AG04449 (cell line): ENCODE measurements at regions of chr10 and their contacts with region 1.

Region 1: DNA sequence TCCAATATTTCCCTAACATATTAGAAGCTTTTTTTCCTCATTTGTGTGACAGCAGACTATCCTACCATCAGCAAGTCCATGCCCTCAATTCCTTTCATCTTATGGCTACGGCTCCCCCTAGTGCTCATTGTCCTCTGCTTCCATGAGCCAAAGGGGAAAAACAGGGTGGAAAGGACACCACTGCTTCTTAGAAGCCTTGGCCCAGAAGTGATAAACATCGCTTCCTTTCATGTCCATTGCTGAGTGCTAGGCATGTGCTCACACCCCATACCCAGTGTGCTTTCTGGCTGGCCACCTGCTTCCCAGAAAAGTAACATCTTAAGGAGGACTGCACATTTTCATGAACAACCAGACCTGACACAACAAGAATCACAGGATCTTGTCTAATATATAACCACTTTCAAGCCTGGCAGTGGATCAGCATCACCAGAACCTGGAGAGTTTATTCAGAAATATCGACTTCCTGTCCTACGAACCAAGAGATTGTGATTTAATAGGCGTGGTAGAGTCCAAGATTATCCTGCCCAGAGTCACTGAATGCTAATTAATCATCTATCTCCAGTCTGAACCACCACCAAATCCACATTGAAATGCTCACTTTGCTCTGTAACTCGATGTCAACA is 650.5 kb upstream of the SORCS1 start:
- DNase-seq: peak; percentile 12
- H3K4me3 ChIP-seq: no peak overlapping the region
- CTCF ChIP-seq: peak; percentile 80

Region 2: DNA sequence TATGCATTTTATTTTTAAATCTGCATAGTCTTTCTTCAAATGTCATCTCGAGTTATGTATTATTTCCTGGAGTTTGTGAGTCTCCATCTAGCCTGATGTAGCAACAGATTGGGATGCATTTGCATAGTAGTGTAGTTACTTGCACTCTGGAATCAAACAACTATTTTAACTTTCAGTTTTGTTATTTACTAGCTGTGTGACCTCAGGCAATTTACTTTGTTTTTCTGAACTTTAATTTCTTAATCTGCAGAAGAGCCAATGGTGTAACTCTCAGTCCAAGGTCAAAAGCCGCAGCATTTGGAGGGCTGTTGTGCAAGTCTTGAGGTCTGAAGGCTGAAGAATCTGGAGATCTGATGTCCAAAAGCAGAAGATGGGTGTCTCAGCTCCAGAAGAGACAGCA is 474.6 kb before region 1 on chr10:
- CTCF ChIA-PET with region 1: no interaction called
- POLR2A ChIA-PET with region 1: no interaction called
- DNase-seq: no peak
- H3K4me3 ChIP-seq: no peak overlapping the region
- CTCF ChIP-seq: no peak

Region 3: GRCh38 chr10:107409522-107409921 is 405.5 kb before region 1 on chr10:
- CTCF ChIA-PET with region 1: interaction called, 88 read pairs
- POLR2A ChIA-PET with region 1: no interaction called
- DNase-seq: no peak
- H3K4me3 ChIP-seq: no peak overlapping the region
- CTCF ChIP-seq: peak; percentile 43

Region 4: DNA sequence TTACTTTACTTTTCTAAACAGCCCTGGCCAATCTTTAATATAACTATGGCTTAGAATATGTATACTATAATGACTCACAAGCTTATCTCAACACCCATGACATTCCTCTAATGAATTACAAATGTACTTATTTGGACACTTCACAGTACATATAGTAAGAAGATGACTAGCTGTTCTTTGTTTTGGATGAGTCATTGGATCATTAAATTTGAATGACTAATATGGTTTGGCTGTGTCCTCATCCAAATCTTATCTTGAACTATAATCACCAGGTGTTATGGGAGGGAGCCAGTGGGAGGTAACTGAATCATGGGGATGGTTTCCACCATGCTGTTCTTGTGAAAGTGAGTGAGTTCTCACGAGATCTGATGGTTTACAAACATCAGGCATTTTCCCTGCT is 157.0 kb after region 1 on chr10:
- CTCF ChIA-PET with region 1: no interaction called
- POLR2A ChIA-PET with region 1: no interaction called
- DNase-seq: peak; percentile 61
- H3K4me3 ChIP-seq: no peak overlapping the region
- CTCF ChIP-seq: no peak

Region 5: DNA sequence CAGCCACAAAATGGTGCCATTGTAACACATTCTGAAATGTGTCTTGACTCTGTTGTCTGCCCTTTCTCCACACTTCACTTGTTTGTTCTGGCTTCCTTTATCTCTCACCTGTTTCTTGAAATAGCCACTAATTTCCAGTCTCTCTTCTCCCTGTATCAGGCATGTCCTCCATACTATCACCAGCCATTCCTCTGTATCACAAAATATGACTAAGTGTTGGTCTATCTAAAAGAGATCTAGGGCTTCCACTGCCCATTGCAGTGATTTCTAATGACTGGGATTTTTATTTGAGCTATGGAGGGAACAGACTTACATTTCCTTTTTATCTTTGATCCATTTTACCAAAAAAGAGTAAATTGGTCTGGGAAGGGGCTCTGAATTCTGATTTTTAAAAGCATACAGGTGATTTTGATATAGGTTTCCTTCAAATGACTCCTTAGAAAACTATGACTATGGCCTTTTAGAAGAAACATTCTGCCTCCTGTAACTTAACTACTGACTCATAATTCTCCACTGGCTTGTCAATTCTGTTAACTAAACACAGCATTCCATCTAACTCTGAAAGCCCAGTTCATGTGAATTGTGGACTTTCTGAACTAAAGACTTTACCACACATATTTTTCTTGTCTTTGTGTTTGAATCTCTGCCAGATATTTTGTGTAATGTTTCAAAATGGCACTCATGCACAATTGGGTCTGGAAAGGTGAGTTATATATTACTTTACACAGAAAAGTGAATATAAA is 987.0 kb after region 1 on chr10:
- CTCF ChIA-PET with region 1: no interaction called
- POLR2A ChIA-PET with region 1: no interaction called
- DNase-seq: no peak
- H3K4me3 ChIP-seq: no peak overlapping the region
- CTCF ChIP-seq: no peak